Colonic mucosa (tissue), 4 donors: ENCODE measurements at regions of chr22 and their contacts with region 1.

Region 1: GRCh38 chr22:17084554-17085276 is at the start of gene IL17RA:
- DNase-seq: peak; percentile 95
- H3K4me3 ChIP-seq: peak within 1 kb of the TSS; percentile 91
- H3K27ac ChIP-seq: peak within 1 kb of the TSS; percentile 88
- H3K4me1 ChIP-seq: peaks cover 4% of the 10 kb centered on the region
- H3K27me3 ChIP-seq: no peaks in the 10 kb centered on the region
- CTCF ChIP-seq: no peak
- total RNA-seq, gene IL17RA: 17.2 to 20.2 TPM

Region 2: DNA sequence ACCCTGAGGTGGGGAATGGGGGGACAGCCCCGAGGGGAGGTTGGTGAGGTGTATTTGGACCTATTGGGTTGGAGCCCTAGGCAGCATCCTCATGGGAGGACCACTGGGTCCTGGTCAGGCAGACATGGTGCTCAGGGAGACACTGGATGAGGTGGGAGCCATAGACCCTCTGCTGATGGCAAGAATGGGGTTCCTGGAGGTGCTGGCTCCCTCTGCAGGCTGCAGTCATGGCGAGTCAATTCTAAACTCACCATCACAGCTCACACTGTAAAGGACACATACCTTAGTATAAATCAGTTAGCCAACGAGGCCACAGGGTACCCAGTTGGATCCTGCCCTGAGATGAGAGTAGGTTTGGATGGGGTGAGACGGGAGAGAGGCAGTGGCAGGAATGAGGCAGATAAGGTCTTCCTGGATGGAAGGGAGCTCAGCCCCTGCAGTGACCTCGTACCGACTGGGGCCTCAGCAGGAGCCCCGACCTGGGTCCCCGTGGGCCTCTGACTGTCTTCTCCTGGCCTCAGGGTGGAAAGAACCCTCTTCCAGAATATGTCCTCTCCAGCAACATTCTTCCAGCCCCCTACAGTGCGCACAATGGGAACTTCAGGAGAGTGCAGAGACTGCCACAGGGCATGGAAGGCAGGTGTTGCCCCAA is 74.9 kb before region 1 on chr22:
- intact Hi-C with region 1: no loop called
- DNase-seq: no peak
- H3K4me3 ChIP-seq: no peak overlapping the region
- H3K27ac ChIP-seq: no peak overlapping the region
- H3K4me1 ChIP-seq: no peaks in the 10 kb centered on the region
- H3K27me3 ChIP-seq: no peaks in the 10 kb centered on the region
- CTCF ChIP-seq: no peak

Region 3: DNA sequence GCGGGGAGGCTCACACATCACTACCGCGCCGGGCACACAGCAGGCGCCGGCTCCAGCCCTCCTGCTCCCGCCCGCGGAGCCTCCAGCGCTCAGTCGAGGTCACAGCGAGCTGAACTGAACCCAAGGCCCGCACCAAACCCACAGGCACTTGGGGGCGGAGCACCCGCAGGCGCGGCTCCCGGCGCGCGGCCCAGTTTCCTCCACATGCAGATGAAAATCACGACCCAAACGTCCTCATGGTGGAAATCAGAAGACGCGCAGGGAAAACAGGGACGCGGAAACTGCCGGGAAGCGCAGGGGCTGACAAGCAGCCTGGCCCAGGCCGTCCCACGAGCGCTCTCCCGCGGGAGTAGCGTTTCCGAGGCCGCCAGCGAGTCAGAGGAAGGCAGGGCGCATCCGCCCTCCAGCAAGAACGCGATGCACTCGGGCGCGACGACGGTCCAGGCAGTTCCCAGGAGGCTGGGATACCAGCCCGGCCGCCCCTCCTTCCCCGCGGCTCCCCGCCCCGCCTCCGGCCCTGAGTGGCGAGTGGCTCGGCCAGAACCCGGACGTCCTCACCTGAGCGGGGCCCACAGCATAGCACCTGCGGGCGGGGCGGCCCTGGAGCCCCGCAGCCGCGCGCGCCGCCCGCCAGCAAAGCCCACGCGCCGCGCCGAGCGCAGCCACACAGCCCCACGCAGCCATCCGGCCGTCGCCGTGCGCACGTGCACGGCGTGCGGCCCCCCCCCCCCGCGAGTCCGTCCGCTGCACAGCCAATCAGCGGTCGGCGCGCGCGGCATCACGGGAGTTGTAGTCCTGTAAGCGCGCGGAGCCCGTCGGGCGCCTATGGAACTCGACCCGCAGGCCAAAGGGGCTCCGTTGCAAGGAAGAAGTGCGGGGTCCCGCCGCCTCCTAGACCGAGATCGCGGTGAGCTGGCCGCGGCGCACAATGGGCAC is 74.1 kb after region 1 on chr22 and contains the start of gene HDHD5:
- intact Hi-C with region 1: loop called (anchors 5 kb)
- DNase-seq: peak; percentile 93
- H3K4me3 ChIP-seq: peak within 1 kb of the TSS; percentile 74
- H3K27ac ChIP-seq: peak within 1 kb of the TSS; percentile 88
- H3K4me1 ChIP-seq: no peaks in the 10 kb centered on the region
- H3K27me3 ChIP-seq: no peaks in the 10 kb centered on the region
- CTCF ChIP-seq: no peak
- total RNA-seq, gene HDHD5: 38.1 to 50.0 TPM

Region 4: GRCh38 chr22:17281440-17281841 is 196.7 kb after region 1 on chr22:
- intact Hi-C with region 1: no loop called
- DNase-seq: no peak
- H3K4me3 ChIP-seq: no peak overlapping the region
- H3K27ac ChIP-seq: no peak overlapping the region
- H3K4me1 ChIP-seq: no peaks in the 10 kb centered on the region
- H3K27me3 ChIP-seq: no peaks in the 10 kb centered on the region
- CTCF ChIP-seq: no peak